Caco-2 (cell line): ENCODE measurements at regions of chr10 and their contacts with region 1.

Region 1: GRCh38 chr10:33550811-33551210 is 216.3 kb upstream of the NRP1 start:
- DNase-seq: no peak
- H3K4me3 ChIP-seq: no peak overlapping the region
- H3K4me3 Mint-ChIP-seq: no peak overlapping the region
- H3K27ac Mint-ChIP-seq: no peak overlapping the region
- H3K4me1 ChIP-seq: peaks cover 16% of the 10 kb centered on the region
- H3K4me1 Mint-ChIP-seq: peaks cover 23% of the 10 kb centered on the region
- H3K27me3 ChIP-seq: no peaks in the 10 kb centered on the region
- H3K27me3 Mint-ChIP-seq: no peaks in the 10 kb centered on the region
- CTCF ChIP-seq: no peak

Region 2: GRCh38 chr10:33534429-33534828 is 16.4 kb before region 1 on chr10:
- CTCF ChIA-PET with region 1: no interaction called
- POLR2A ChIA-PET with region 1: no interaction called
- intact Hi-C with region 1: loop called (anchors 1 kb)
- DNase-seq: peak in 1 of 2 experiments; percentile 16
- H3K4me3 ChIP-seq: no peak overlapping the region
- H3K4me3 Mint-ChIP-seq: no peak overlapping the region
- H3K27ac Mint-ChIP-seq: no peak overlapping the region
- H3K4me1 ChIP-seq: no peaks in the 10 kb centered on the region
- H3K4me1 Mint-ChIP-seq: no peaks in the 10 kb centered on the region
- H3K27me3 ChIP-seq: no peaks in the 10 kb centered on the region
- H3K27me3 Mint-ChIP-seq: no peaks in the 10 kb centered on the region
- CTCF ChIP-seq: no peak

Region 3: GRCh38 chr10:33801748-33802147 is 250.9 kb after region 1 on chr10:
- CTCF ChIA-PET with region 1: no interaction called
- POLR2A ChIA-PET with region 1: no interaction called
- intact Hi-C with region 1: no loop called
- DNase-seq: peak; percentile 81 to 88
- H3K4me3 ChIP-seq: no peak overlapping the region
- H3K4me3 Mint-ChIP-seq: peak overlapping the region; percentile 39
- H3K27ac Mint-ChIP-seq: peak overlapping the region; percentile 90
- H3K4me1 ChIP-seq: peaks cover 69% of the 10 kb centered on the region
- H3K4me1 Mint-ChIP-seq: peaks cover 50% of the 10 kb centered on the region
- H3K27me3 ChIP-seq: no peaks in the 10 kb centered on the region
- H3K27me3 Mint-ChIP-seq: no peaks in the 10 kb centered on the region
- CTCF ChIP-seq: no peak